ENCODE measurements at regions of chr14 and their contacts with region 1.

Region 1: GRCh38 chr14:100067971-100068959 is 3.0 kb downstream of the EVL start:
- DNase-seq: peak; percentile 89
- H3K4me3 Mint-ChIP-seq: peak overlapping the region; percentile 85
- H3K27ac Mint-ChIP-seq: peak overlapping the region; percentile 99
- H3K4me1 Mint-ChIP-seq: peaks cover 79% of the 10 kb centered on the region
- H3K27me3 Mint-ChIP-seq: no peaks in the 10 kb centered on the region

Region 2: DNA sequence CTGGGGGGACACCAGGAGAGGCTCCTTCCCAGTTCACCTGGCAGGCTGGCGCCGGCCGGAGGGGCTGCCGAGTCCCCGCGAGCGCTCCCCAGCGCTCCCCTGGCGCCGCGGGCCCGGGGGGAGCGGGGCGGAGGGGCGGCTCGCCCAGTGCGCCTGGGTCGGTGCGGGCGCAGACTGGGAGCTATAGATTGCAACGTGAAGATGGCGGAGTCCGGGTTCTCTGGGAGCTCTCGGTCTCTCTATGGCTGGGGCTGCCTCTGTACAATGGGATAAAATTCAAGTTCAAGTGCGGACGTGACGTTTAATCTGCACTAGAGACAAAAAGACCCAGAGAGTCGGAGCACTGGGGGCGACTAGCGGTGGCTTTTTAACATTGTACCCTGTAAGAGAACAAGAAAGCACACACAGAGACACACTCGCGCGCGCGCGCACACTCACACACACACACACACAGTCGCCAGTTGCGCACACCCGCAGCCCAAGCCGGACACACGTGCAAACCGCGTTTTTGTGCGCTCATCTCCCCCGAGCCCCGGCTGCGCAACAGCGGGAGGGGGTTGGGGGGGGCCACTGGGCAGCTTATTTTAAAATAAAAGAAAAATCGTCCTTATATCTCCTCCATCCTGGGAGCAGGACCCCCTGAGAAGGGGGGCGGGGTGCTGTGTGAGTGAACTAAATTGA is 796.2 kb before region 1 on chr14 and contains the start of gene BCL11B:
- intact Hi-C with region 1: loop called (anchors 5 kb)
- DNase-seq: peak; percentile 88
- H3K4me3 Mint-ChIP-seq: peak within 1 kb of the TSS; percentile 93
- H3K27ac Mint-ChIP-seq: peak within 1 kb of the TSS; percentile 94
- H3K4me1 Mint-ChIP-seq: peaks cover 37% of the 10 kb centered on the region
- H3K27me3 Mint-ChIP-seq: peaks cover 10% of the 10 kb centered on the region
- total RNA-seq, gene BCL11B: 34.1 and 34.9 TPM in 2 replicates

Region 3: DNA sequence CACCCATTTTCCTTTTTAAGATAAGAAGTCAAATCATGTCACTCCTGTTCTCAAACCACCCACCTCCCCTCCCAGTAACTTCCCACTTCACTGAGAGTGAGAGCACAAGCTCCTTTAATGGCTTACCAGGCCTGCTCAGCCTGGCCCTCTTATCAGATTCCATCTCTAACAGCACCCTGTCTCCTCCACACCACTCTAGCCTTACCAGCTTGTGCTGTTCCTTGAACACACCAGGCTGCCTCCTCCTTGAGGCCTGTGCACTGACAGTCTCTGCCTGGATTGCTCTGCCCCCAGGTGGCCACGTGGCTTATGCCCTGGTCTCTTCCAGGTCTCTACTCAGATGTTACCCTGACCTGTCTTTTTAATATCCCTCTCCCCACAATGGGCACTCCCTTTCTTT is 43.2 kb before region 1 on chr14:
- intact Hi-C with region 1: no loop called
- DNase-seq: peak; percentile 13
- H3K4me3 Mint-ChIP-seq: no peak overlapping the region
- H3K27ac Mint-ChIP-seq: peak overlapping the region; percentile 34
- H3K4me1 Mint-ChIP-seq: peaks cover 11% of the 10 kb centered on the region
- H3K27me3 Mint-ChIP-seq: no peaks in the 10 kb centered on the region

Region 4: DNA sequence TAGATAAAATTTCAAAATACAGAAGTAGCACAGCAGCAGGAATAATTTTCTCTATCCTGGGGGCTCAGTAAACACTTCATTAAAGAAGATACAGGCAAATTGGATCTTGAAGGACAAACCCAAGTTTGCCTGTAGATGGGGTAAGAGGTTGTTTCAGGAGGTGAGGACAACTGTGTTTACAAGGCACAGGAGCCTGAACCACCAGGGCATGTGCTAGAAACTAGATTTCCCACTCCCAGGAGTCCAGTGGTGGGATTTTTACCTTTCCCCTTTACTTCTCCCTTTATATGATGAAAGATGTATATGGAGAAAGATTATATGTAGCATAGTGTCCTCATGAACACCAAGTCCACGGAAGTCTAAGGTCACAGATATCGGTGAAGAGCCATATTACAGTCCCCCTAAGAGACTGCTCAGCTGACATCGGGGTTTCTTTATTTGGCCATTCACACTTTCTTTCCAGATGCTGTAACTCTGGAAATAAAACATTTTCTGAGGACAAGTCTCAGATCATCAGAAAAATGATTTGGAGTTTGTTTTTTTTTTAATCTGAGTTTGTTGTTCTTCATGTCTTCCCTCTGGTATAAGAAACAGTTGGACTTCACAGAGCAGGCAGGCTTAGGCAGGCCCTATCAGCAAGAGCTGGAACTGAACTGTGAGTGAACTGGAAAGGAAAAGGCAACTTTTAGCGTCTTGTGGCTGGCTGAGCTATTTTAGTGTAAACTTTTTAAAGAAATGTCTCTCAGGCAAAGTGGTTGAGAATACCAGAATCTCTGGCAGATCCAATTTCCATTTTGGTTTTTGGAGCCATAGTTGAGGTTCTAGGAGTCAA is 11.1 kb before region 1 on chr14:
- intact Hi-C with region 1: loop called (anchors 1 kb)
- DNase-seq: no peak
- H3K4me3 Mint-ChIP-seq: peak overlapping the region; percentile 19
- H3K27ac Mint-ChIP-seq: peak overlapping the region; percentile 73
- H3K4me1 Mint-ChIP-seq: peaks cover 67% of the 10 kb centered on the region
- H3K27me3 Mint-ChIP-seq: no peaks in the 10 kb centered on the region

Region 5: GRCh38 chr14:100108042-100108825 is 40.0 kb after region 1 on chr14:
- intact Hi-C with region 1: loop called (anchors 1 kb)
- DNase-seq: peak; percentile 77
- H3K4me3 Mint-ChIP-seq: no peak overlapping the region
- H3K27ac Mint-ChIP-seq: peak overlapping the region; percentile 86
- H3K4me1 Mint-ChIP-seq: peaks cover 71% of the 10 kb centered on the region
- H3K27me3 Mint-ChIP-seq: no peaks in the 10 kb centered on the region

Region 6: DNA sequence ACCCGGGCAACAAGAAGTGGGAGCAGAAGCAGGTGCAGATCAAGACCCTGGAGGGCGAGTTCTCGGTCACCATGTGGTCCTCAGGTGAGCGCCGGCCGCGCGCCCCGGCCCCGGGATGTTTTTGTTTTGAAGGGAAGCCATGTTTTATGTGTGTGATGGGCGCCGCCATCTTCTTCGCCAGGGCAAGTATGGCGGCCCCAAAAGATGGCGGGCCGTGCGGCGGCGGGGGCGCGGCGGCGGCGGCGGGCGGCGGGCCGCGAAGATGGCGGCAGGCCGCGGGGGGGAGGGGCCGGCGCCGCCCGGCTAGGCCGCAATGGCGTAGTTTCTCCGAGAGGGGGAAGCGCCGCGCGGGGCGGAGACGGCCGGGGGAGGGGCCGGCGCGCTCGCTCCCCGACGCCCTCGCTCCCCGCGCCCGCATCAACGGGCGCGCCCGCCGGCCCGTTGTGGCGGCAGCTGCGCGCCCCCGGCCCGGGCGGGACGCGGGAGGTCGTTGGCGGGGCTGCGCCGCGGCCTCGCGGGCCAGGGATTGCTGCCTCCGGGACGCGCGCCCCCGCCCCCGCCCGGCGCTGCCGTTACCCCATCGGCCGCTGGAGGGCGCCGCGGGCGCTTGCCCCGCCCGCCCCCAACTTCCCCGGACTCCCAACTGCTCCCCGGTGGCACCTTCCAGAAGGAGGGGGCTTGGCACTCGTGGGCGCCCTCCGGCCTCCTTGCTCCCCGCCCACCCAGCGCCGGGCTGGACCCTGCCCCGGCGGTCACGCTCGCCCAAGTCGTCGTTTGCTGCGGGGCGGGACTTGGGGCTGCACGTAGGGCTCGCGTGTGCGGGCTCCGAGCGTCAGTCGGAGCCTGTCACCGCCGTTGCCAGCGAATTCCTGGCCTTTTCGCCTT is 171.8 kb after region 1 on chr14:
- intact Hi-C with region 1: loop called (anchors 2 kb)
- DNase-seq: peak; percentile 83
- H3K4me3 Mint-ChIP-seq: peak overlapping the region; percentile 87
- H3K27ac Mint-ChIP-seq: peak overlapping the region; percentile 83
- H3K4me1 Mint-ChIP-seq: peaks cover 48% of the 10 kb centered on the region
- H3K27me3 Mint-ChIP-seq: no peaks in the 10 kb centered on the region

Measured in activated T-helper 2 cell treated with anti-CD3 and anti-CD28 coated beads, Interferon-gamma antibody, Interleukin-2, Interleukin-4, amounts not matched to agents 10 μg/mL and 5 μg/mL and 100 μg/mL, durations not matched to agents 14 hours and 24 hours and 36 hours (primary cell).